ENCODE measurements at regions of chr9 and their contacts with region 1.

Region 1: GRCh38 chr9:19252174-19252884 is 21.8 kb downstream of the DENND4C start:
- DNase-seq: no peak
- ATAC-seq: no peak
- H3K4me3 ChIP-seq: no peak overlapping the region
- H3K4me3 Mint-ChIP-seq: no peak overlapping the region
- H3K27ac ChIP-seq: no peak overlapping the region
- H3K27ac Mint-ChIP-seq: no peak overlapping the region
- H3K4me1 ChIP-seq: no peaks in the 10 kb centered on the region
- H3K4me1 Mint-ChIP-seq: peaks cover 30% of the 10 kb centered on the region
- H3K27me3 ChIP-seq: no peaks in the 10 kb centered on the region
- H3K27me3 Mint-ChIP-seq: no peaks in the 10 kb centered on the region
- CTCF ChIP-seq: no peak

Region 2: GRCh38 chr9:18890372-18890771 is 362.0 kb before region 1 on chr9:
- CTCF ChIA-PET with region 1: no interaction called
- POLR2A ChIA-PET with region 1: no interaction called
- intact Hi-C with region 1: no loop called
- DNase-seq: no peak
- ATAC-seq: no peak
- H3K4me3 ChIP-seq: no peak overlapping the region
- H3K4me3 Mint-ChIP-seq: no peak overlapping the region
- H3K27ac ChIP-seq: no peak overlapping the region
- H3K27ac Mint-ChIP-seq: no peak overlapping the region
- H3K4me1 ChIP-seq: no peaks in the 10 kb centered on the region
- H3K4me1 Mint-ChIP-seq: no peaks in the 10 kb centered on the region
- H3K27me3 ChIP-seq: no peaks in the 10 kb centered on the region
- H3K27me3 Mint-ChIP-seq: peaks cover 8% of the 10 kb centered on the region
- CTCF ChIP-seq: no peak

Region 3: GRCh38 chr9:19085295-19085694 is 167.0 kb before region 1 on chr9:
- CTCF ChIA-PET with region 1: no interaction called
- POLR2A ChIA-PET with region 1: interaction called, 10 read pairs
- intact Hi-C with region 1: no loop called
- DNase-seq: peak; percentile 30
- ATAC-seq: no peak
- H3K4me3 ChIP-seq: no peak overlapping the region
- H3K4me3 Mint-ChIP-seq: no peak overlapping the region
- H3K27ac ChIP-seq: no peak overlapping the region
- H3K27ac Mint-ChIP-seq: no peak overlapping the region
- H3K4me1 ChIP-seq: no peaks in the 10 kb centered on the region
- H3K4me1 Mint-ChIP-seq: no peaks in the 10 kb centered on the region
- H3K27me3 ChIP-seq: no peaks in the 10 kb centered on the region
- H3K27me3 Mint-ChIP-seq: no peaks in the 10 kb centered on the region
- CTCF ChIP-seq: peak; percentile 57

Region 4: DNA sequence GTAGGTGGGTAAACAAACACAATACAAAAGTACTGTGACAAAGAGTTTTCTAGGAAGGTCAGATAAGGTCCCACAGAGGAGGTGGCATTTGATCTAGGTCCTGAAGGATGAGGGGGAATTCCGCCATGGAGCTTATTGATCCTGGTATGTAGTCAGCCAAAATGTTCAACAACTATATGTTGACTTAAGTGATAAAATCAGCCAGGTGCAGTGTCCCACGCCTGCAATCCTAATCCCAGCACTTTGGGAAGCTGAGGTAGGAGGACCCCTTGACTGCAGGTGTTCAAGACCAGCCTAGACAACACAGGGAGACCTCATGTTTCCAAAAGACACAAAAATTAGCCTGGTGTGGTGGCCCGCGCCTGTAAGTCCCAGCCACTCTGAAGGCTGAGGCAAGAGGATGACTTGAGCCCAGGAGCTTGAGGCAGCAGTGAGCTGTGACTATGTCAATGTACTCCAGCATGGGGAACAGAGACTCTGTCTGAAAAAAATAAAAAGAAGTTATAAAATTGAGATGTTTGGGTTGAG is 78.7 kb before region 1 on chr9:
- CTCF ChIA-PET with region 1: no interaction called
- POLR2A ChIA-PET with region 1: no interaction called
- intact Hi-C with region 1: no loop called
- DNase-seq: no peak
- ATAC-seq: no peak
- H3K4me3 ChIP-seq: no peak overlapping the region
- H3K4me3 Mint-ChIP-seq: no peak overlapping the region
- H3K27ac ChIP-seq: no peak overlapping the region
- H3K27ac Mint-ChIP-seq: no peak overlapping the region
- H3K4me1 ChIP-seq: peaks cover 0 to 4% of the 10 kb centered on the region in 2 donors
- H3K4me1 Mint-ChIP-seq: peaks cover 6% of the 10 kb centered on the region
- H3K27me3 ChIP-seq: no peaks in the 10 kb centered on the region
- H3K27me3 Mint-ChIP-seq: no peaks in the 10 kb centered on the region
- CTCF ChIP-seq: no peak